Activated CD8-positive, alpha-beta T cell treated with anti-CD3 and anti-CD28 coated beads, Interleukin-2, amount 10 ng/mL, durations not matched to agents 7 days and 5 days (primary cell): ENCODE measurements at regions of chr7 and their contacts with region 1.

Region 1: GRCh38 chr7:992709-993607 is 10.0 kb downstream of the CYP2W1 start:
- DNase-seq: peak; percentile 96
- ATAC-seq: peak; percentile 99
- H3K4me3 Mint-ChIP-seq: no peak overlapping the region
- H3K27ac Mint-ChIP-seq: peak overlapping the region; percentile 57
- H3K4me1 Mint-ChIP-seq: peaks cover 4% of the 10 kb centered on the region
- H3K27me3 Mint-ChIP-seq: no peaks in the 10 kb centered on the region

Region 2: GRCh38 chr7:974820-975681 is 17.9 kb before region 1 on chr7 and contains the start of gene COX19:
- CTCF ChIA-PET with region 1: interaction called, 28 read pairs
- POLR2A ChIA-PET with region 1: interaction called, 9 read pairs
- DNase-seq: peak; percentile 92
- ATAC-seq: peak; percentile 91
- H3K4me3 Mint-ChIP-seq: peak within 1 kb of the TSS; percentile 93
- H3K27ac Mint-ChIP-seq: peak within 1 kb of the TSS; percentile 92
- H3K4me1 Mint-ChIP-seq: peaks cover 28% of the 10 kb centered on the region
- H3K27me3 Mint-ChIP-seq: no peaks in the 10 kb centered on the region
- total RNA-seq, gene COX19: 16.8 to 18.2 TPM

Region 3: DNA sequence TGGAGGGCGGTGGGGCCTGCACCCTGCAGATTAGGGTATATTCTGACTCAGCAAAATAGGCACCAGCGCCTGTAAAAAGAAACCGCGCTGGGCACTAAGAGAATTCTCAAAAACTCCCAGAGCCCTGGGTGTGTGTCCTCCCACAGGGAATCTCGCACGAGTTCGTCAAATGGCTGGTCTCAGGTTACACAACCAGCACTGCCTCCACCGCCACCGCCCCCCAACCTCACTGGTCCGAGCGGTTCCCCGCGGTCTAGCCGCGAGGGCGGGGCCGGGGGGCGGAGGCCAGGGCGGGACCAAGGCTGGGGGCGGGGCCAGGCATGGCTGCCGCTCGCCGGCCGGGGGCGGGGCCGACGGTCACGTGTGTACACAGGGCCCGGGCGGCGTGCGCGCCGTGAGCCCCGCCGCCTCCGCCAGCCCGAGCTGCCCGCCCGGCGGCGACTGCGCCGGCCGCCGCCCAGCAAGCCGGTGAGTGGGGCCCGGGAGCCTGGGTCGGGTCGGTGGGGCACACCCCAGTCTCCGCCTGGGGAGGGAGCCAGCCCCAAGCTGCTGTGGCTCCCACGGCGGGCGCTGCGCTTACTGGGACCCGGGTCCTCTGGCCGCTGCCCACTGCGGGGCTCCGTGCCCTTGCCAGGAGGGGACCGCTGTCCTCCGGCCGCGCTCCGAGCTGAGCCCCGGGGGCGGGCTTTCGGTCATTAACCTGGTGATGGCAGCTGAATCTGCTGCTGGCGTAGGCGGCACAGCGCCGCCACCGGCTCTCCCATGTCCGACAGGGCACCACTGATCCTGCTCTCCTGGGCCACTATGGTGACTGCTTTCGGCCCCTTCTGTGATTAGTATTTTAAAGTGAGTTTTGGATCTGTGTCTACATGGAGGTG is 51.5 kb after region 1 on chr7 and contains the start of gene GPR146:
- CTCF ChIA-PET with region 1: interaction called, 43 read pairs
- POLR2A ChIA-PET with region 1: no interaction called
- DNase-seq: peak; percentile 92
- ATAC-seq: peak; percentile 94
- H3K4me3 Mint-ChIP-seq: peak within 1 kb of the TSS; percentile 77
- H3K27ac Mint-ChIP-seq: peak within 1 kb of the TSS; percentile 78
- H3K4me1 Mint-ChIP-seq: peaks cover 69% of the 10 kb centered on the region
- H3K27me3 Mint-ChIP-seq: no peaks in the 10 kb centered on the region
- total RNA-seq, gene GPR146: 2.7 to 3.1 TPM

Region 4: GRCh38 chr7:1059200-1060091 is 66.5 kb after region 1 on chr7:
- CTCF ChIA-PET with region 1: interaction called, 176 read pairs
- POLR2A ChIA-PET with region 1: no interaction called
- DNase-seq: no peak
- ATAC-seq: peak; percentile 44
- H3K4me3 Mint-ChIP-seq: no peak overlapping the region
- H3K27ac Mint-ChIP-seq: no peak overlapping the region
- H3K4me1 Mint-ChIP-seq: peaks cover 21% of the 10 kb centered on the region
- H3K27me3 Mint-ChIP-seq: no peaks in the 10 kb centered on the region

Region 5: GRCh38 chr7:1086588-1087464 is 93.9 kb after region 1 on chr7:
- CTCF ChIA-PET with region 1: interaction called, 19 read pairs
- POLR2A ChIA-PET with region 1: no interaction called
- DNase-seq: peak; percentile 82
- ATAC-seq: peak; percentile 93
- H3K4me3 Mint-ChIP-seq: peak overlapping the region; percentile 65
- H3K27ac Mint-ChIP-seq: no peak overlapping the region
- H3K4me1 Mint-ChIP-seq: peaks cover 12% of the 10 kb centered on the region
- H3K27me3 Mint-ChIP-seq: no peaks in the 10 kb centered on the region

Region 6: DNA sequence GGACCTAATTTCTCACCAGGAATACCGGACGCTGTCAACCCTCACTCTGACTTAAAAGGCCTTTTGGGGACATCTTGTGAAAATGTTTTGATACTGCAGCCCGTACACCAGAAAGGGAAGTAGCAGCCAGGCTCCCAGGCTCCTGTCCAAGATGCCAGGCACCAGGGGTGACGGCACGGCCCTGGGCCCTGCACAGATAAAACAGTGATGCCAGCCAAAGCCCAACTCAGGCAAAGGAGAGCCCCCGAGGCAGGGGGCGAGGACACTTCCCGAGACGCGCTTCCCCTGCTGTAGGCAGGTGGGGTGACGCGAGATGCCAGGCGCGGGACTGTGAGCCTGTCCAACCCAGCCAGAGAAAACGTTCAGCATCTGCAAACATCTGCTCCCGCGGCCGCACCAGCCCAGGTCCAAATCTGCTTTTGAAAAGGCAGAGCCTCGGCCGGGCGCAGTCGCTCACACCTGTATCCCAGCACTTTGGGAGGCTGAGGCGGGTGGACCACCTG is 151.4 kb after region 1 on chr7:
- CTCF ChIA-PET with region 1: interaction called, 23 read pairs
- POLR2A ChIA-PET with region 1: no interaction called
- DNase-seq: no peak
- ATAC-seq: no peak
- H3K4me3 Mint-ChIP-seq: no peak overlapping the region
- H3K27ac Mint-ChIP-seq: no peak overlapping the region
- H3K4me1 Mint-ChIP-seq: no peaks in the 10 kb centered on the region
- H3K27me3 Mint-ChIP-seq: no peaks in the 10 kb centered on the region

Region 7: DNA sequence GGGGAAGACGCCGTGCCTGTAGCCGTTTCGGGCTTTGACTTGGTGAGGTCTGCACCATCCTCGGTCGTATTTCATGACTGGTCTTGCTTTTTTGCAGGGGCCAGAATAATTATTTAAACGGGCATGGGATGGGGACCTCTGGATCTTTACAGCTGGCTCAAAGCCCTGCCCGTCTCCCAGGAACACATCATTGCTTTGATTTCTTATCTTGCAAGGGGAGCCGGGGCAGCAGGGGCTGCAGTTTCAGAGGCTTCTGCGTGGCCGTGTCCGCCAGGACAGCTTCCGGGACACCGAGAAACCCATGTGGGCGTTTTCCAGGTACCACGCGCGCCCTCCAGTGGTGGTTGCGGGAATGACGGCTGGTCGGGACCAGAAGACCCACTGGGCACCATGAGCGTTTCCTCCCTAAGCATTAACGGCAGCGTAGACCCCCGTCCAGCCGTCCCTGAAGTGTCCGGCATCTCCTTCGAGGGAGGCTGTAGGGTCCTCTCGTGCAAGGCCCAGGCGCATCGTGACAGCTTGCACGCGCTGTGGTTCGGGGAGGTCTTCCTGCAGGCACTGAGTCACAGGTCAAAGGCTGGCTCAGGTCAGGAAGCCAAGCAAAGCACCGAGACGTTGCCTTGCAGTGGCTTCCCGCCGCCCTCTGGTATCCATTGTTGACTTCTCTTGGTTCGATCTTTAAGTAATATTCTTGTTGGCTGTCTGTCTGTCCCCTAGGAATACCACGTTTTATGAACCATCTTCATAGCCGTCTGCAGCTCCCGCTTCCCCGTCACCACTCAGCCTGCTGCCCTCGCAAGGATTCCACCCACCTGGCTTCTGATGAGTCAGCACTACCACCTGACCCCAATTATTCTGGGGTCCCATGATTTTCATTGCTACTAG is 183.3 kb after region 1 on chr7:
- CTCF ChIA-PET with region 1: interaction called, 75 read pairs
- POLR2A ChIA-PET with region 1: interaction called, 4 read pairs
- DNase-seq: peak; percentile 87
- ATAC-seq: peak; percentile 73
- H3K4me3 Mint-ChIP-seq: peak overlapping the region; percentile 22
- H3K27ac Mint-ChIP-seq: peak overlapping the region; percentile 86
- H3K4me1 Mint-ChIP-seq: peaks cover 20% of the 10 kb centered on the region
- H3K27me3 Mint-ChIP-seq: peaks cover 11% of the 10 kb centered on the region